Naive thymus-derived CD4-positive, alpha-beta T cell (primary cell): ENCODE measurements at regions of chr14 and their contacts with region 1.

Region 1: DNA sequence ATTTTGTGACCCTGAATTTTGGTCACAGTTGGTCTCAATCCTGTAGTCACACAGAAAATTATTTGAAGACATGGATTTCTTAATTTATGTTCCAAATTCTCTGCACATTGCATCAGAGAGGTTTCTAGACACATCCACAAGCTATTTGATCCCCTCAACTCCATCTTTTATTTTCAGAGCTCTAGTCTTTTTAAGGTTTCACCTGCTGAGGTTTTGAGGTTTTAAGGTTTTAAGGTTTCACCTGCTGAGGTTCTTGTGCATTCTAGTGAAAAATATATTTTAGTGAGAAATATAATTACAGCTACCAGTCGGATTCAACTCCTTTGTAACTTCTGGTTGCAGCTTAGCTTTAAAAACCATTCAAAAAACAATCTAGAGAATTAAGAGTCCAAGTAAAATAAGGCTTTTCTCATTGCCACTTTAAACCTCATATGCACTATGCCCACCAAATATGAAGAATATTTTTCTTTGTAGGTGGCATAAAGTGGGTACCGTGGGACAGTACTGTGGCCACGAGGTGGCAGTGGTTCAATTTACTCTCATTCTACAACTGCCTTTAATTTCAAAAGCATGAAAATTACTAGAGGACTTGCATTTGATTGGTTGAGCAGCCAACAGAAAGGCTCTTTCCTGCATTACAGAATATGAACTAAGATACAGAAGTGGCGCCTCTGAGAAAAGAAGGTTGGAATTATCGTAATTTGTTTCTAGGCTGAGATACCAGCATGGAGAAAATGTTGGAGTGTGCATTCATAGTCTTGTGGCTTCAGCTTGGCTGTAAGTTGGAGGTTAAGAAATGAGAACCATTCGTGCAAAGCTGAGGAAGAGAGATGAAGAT is 366.5 kb upstream of the OR4E1 start:
- DNase-seq: peak in 7 of 9 donors; percentile 46 to 70 (median 59)
- ATAC-seq: peak; percentile 93
- H3K4me3 ChIP-seq: peak overlapping the region; percentile 40
- H3K4me3 Mint-ChIP-seq: peak overlapping the region; percentile 79 to 91 (median 83)
- H3K27ac ChIP-seq: peak overlapping the region; percentile 64
- H3K27ac Mint-ChIP-seq: peak overlapping the region; percentile 80 to 92 (median 88)
- H3K4me1 ChIP-seq: no peaks in the 10 kb centered on the region
- H3K4me1 Mint-ChIP-seq: peaks cover 2 to 34% (median 12%) of the 10 kb centered on the region in 7 donors
- H3K27me3 ChIP-seq: no peaks in the 10 kb centered on the region
- H3K27me3 Mint-ChIP-seq: peaks cover 0 to 8% (median 0%) of the 10 kb centered on the region in 5 donors

Region 2: GRCh38 chr14:21203470-21204166 is 836.5 kb before region 1 on chr14:
- CTCF ChIA-PET with region 1: no interaction called
- POLR2A ChIA-PET with region 1: no interaction called
- intact Hi-C with region 1: no loop called
- DNase-seq: no peak
- ATAC-seq: no peak
- H3K4me3 ChIP-seq: no peak overlapping the region
- H3K4me3 Mint-ChIP-seq: no peak overlapping the region
- H3K27ac ChIP-seq: no peak overlapping the region
- H3K27ac Mint-ChIP-seq: peak overlapping the region in 8 of 9 donors; percentile 2 to 76 (median 31)
- H3K4me1 ChIP-seq: no peaks in the 10 kb centered on the region
- H3K4me1 Mint-ChIP-seq: peaks cover 7 to 50% (median 23%) of the 10 kb centered on the region in 7 donors
- H3K27me3 ChIP-seq: no peaks in the 10 kb centered on the region
- H3K27me3 Mint-ChIP-seq: no peaks in the 10 kb centered on the region

Region 3: GRCh38 chr14:21437063-21437901 is 602.9 kb before region 1 on chr14:
- CTCF ChIA-PET with region 1: no interaction called
- POLR2A ChIA-PET with region 1: no interaction called
- intact Hi-C with region 1: no loop called
- DNase-seq: peak; percentile 93 to 100 (median 99)
- ATAC-seq: peak; percentile 100
- H3K4me3 ChIP-seq: peak overlapping the region; percentile 87
- H3K4me3 Mint-ChIP-seq: peak overlapping the region; percentile 86 to 97 (median 92)
- H3K27ac ChIP-seq: peak overlapping the region; percentile 94
- H3K27ac Mint-ChIP-seq: peak overlapping the region; percentile 90 to 98 (median 94)
- H3K4me1 ChIP-seq: peaks cover 13 to 22% of the 10 kb centered on the region in 2 donors
- H3K4me1 Mint-ChIP-seq: peaks cover 43 to 86% (median 68%) of the 10 kb centered on the region in 7 donors
- H3K27me3 ChIP-seq: no peaks in the 10 kb centered on the region
- H3K27me3 Mint-ChIP-seq: no peaks in the 10 kb centered on the region

Region 4: GRCh38 chr14:21997300-21997699 is 42.9 kb before region 1 on chr14:
- CTCF ChIA-PET with region 1: interaction called, 11 read pairs
- POLR2A ChIA-PET with region 1: no interaction called
- intact Hi-C with region 1: loop called in 1 of 2 experiments (anchors 2 kb)
- DNase-seq: peak in 6 of 9 donors; percentile 39 to 65 (median 58)
- ATAC-seq: peak; percentile 91
- H3K4me3 ChIP-seq: peak overlapping the region; percentile 51
- H3K4me3 Mint-ChIP-seq: peak overlapping the region; percentile 85 to 96 (median 90)
- H3K27ac ChIP-seq: peak overlapping the region; percentile 54
- H3K27ac Mint-ChIP-seq: peak overlapping the region; percentile 72 to 95 (median 89)
- H3K4me1 ChIP-seq: peaks cover under 1 to 2% of the 10 kb centered on the region in 2 donors
- H3K4me1 Mint-ChIP-seq: peaks cover 1 to 35% (median 19%) of the 10 kb centered on the region in 7 donors
- H3K27me3 ChIP-seq: no peaks in the 10 kb centered on the region
- H3K27me3 Mint-ChIP-seq: peaks cover 0 to 5% (median 0%) of the 10 kb centered on the region in 5 donors